ENCODE measurements at regions of chr14 and their contacts with region 1.

Region 1: GRCh38 chr14:65958664-65959562 is 527.3 kb upstream of the CCDC196 start:
- DNase-seq: no peak
- H3K4me3 Mint-ChIP-seq: no peak overlapping the region
- H3K27ac Mint-ChIP-seq: no peak overlapping the region
- H3K4me1 Mint-ChIP-seq: peaks cover 25% of the 10 kb centered on the region
- H3K27me3 Mint-ChIP-seq: peaks cover 15% of the 10 kb centered on the region

Region 2: DNA sequence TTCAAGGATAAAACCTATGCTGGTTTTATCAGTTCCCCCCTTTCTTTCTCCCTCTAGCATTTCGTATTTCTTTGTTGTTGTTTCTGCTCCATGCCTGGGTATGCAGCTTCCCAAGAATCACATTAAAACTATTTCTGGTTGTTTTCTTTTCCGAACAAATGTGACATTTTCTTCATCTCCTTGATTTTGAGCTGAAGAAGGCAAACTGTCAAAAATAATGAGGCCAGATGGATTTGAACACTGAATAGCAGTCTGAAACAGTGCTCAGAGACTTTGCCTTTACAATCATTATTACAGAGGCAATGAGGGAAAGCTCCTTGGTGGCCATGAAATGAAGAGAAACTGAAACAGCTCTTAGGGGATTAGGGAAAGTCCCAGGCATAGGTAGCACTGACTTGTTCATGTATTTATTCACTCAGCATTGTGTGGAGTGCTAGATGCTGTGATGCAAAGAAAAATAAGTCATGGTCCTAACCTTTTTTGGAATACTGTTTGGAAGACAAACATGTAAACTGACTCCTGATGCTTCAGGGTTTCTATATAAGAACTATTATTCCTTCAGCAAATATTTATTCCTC is 226.9 kb before region 1 on chr14:
- intact Hi-C with region 1: loop called (anchors 10 kb)
- DNase-seq: no peak
- H3K4me3 Mint-ChIP-seq: no peak overlapping the region
- H3K27ac Mint-ChIP-seq: peak overlapping the region; percentile 73
- H3K4me1 Mint-ChIP-seq: peaks cover 12% of the 10 kb centered on the region
- H3K27me3 Mint-ChIP-seq: no peaks in the 10 kb centered on the region

Region 3: DNA sequence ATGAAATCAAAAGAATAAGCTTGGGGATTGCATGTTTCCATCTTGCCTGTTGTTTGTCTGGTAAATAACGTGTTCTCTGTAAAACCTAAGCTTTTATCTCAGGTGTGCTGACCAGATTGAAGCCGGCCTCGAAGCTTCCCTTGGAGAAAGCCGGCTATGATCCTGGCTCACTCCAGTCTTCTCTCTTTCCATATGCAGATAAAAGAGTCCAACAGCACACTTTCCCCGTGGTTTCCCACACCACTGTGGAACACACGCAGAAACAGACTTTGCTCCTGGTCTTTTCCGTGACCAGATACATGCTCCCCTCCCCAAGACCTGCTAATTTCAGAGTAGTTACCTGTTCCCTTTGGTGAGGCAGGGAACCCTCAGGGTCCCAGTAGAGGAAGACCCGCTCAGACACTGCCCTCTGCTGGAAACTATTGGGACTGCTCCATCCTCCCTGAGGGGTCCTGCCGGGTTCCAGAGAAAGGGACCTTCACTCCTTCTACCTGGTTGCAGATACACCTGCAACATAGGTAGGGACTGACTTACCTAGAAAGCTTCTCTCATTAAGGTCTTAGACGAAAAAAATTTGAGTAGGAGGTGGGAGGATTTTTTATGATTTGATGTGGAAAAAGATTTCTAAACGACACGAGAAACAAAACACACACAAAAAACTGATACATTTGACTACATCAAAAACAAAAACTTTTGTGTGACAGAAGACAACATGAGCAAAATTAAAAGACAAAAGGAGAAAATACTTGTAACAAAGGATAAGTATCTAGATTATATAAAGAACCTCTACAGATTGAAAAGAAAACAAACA is 111.8 kb after region 1 on chr14:
- intact Hi-C with region 1: loop called (anchors 1 kb)
- DNase-seq: peak; percentile 50
- H3K4me3 Mint-ChIP-seq: no peak overlapping the region
- H3K27ac Mint-ChIP-seq: no peak overlapping the region
- H3K4me1 Mint-ChIP-seq: peaks cover 7% of the 10 kb centered on the region
- H3K27me3 Mint-ChIP-seq: peaks cover 13% of the 10 kb centered on the region

Measured in activated T-helper 2 cell treated with anti-CD3 and anti-CD28 coated beads, Interferon-gamma antibody, Interleukin-2, Interleukin-4, amounts not matched to agents 10 μg/mL and 5 μg/mL and 100 μg/mL, durations not matched to agents 14 hours and 24 hours and 36 hours (primary cell).